ENCODE measurements at regions of chr4 and their contacts with region 1.

Region 1: DNA sequence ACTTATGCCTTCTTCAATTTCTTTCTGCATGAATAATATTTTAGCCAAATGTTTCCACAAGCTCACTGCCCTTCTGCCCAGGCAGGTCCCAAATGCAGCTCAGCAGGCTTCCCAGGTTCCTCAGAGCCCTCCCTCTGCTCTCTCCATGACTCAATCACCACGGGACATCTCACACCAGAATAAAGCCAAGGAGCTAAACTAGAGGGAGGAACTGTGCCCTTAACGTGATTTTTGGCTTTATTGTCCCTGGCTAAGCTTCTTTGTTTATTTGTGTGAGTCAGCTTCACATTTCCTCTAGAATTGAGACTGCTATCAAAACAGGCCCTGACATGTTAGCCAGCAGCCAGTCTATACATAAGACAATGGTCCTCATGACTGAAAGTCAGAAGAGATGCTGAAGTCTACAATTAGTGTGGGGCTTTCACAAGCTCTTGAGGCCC is 186.4 kb upstream of the GALNT7 start:
- DNase-seq: peak; percentile 92
- ATAC-seq: peak; percentile 88
- H3K4me3 ChIP-seq: no peak overlapping the region
- H3K27ac ChIP-seq: peak overlapping the region; percentile 84; the same call in 1 of the 2 replicates
- H3K4me1 ChIP-seq: peaks cover 2% of the 10 kb centered on the region; the same call in 1 of the 2 replicates
- H3K27me3 ChIP-seq: no peaks in the 10 kb centered on the region; the same call in 1 of the 2 replicates
- CTCF ChIP-seq: no peak
- POLR2A ChIP-seq: no peak
- RAD21 ChIP-seq: no peak

Region 2: GRCh38 chr4:171478181-171478580 is 1504.0 kb before region 1 on chr4:
- CTCF ChIA-PET with region 1: no interaction called
- POLR2A ChIA-PET with region 1: interaction called, 14 read pairs
- dilution Hi-C with region 1: no loop called
- in situ Hi-C with region 1: no loop called
- intact Hi-C with region 1: no loop called
- DNase-seq: no peak
- ATAC-seq: no peak
- H3K4me3 ChIP-seq: no peak overlapping the region
- H3K27ac ChIP-seq: no peak overlapping the region
- H3K4me1 ChIP-seq: no peaks in the 10 kb centered on the region
- H3K27me3 ChIP-seq: no peaks in the 10 kb centered on the region
- CTCF ChIP-seq: no peak
- POLR2A ChIP-seq: no peak
- RAD21 ChIP-seq: no peak

Measured in IMR-90 (cell line).